CD8-positive, alpha-beta memory T cell (primary cell): ENCODE measurements at regions of chr1 and their contacts with region 1.

Region 1: DNA sequence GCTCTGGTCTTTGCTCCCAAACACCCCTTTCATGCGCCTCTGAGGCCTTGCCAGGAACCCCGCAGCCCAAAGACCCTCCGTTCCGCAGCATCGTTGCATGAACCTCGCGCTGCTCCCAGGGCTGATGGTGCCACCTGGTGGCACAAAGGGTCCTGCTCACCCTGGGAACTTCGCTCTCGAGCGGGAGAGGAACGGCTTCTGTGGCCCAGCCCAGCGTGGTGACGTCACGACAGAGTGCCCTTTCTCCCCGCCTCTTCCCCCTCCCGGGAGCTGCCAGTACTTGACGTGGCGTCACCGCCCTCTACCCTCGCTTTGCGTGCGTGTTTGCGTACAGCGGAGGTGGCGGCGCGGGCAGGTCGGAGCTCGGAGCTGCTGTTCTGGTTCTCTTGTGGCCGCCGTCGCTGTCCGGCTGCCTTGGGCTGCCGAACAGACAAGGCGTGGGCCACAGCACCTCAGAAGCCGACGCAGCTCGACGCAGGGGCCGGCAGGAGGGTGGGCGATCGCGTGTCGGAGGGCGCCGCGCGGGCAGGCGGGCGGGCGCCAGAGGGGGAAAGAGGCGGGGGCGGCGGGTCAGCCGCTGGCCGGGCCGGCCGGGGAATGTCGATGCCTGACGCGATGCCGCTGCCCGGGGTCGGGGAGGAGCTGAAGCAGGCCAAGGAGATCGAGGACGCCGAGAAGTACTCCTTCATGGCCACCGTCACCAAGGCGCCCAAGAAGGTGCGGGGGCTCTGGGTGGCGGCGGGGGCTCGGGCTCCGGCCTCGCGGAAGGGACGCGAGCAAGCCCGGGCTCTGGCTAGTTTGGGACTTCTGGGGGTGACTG is at the start of gene AHCYL1:
- DNase-seq: peak; percentile 98 to 99 (median 99)
- H3K4me3 ChIP-seq: peak within 1 kb of the TSS; percentile 75
- H3K4me3 Mint-ChIP-seq: peak within 1 kb of the TSS; percentile 92 to 99 (median 97)
- H3K27ac ChIP-seq: peak within 1 kb of the TSS; percentile 77
- H3K27ac Mint-ChIP-seq: peak within 1 kb of the TSS; percentile 68 to 100 (median 99)
- H3K4me1 ChIP-seq: peaks cover 36% of the 10 kb centered on the region
- H3K4me1 Mint-ChIP-seq: peaks cover 38 to 46% (median 44%) of the 10 kb centered on the region in 3 donors
- H3K27me3 ChIP-seq: no peaks in the 10 kb centered on the region
- H3K27me3 Mint-ChIP-seq: peaks cover 0 to 2% of the 10 kb centered on the region in 2 donors
- total RNA-seq, gene AHCYL1: 56.9 to 59.9 TPM

Region 2: GRCh38 chr1:109643385-109644230 is 341.1 kb before region 1 on chr1:
- CTCF ChIA-PET with region 1: interaction called, 90 read pairs
- POLR2A ChIA-PET with region 1: interaction called, 3 read pairs
- DNase-seq: peak; percentile 67 to 88 (median 74)
- H3K4me3 ChIP-seq: no peak overlapping the region
- H3K4me3 Mint-ChIP-seq: no peak overlapping the region
- H3K27ac ChIP-seq: no peak overlapping the region
- H3K27ac Mint-ChIP-seq: peak overlapping the region in 2 of 8 donors; percentile 29 to 54
- H3K4me1 ChIP-seq: peaks cover 4% of the 10 kb centered on the region
- H3K4me1 Mint-ChIP-seq: peaks cover 4 to 12% (median 7%) of the 10 kb centered on the region in 3 donors
- H3K27me3 ChIP-seq: no peaks in the 10 kb centered on the region
- H3K27me3 Mint-ChIP-seq: peaks cover 0 to 3% of the 10 kb centered on the region in 2 donors

Region 3: GRCh38 chr1:109773146-109773899 is 211.3 kb before region 1 on chr1:
- CTCF ChIA-PET with region 1: interaction called, 520 read pairs
- POLR2A ChIA-PET with region 1: interaction called, 19 read pairs
- DNase-seq: peak; percentile 27 to 81 (median 61)
- H3K4me3 ChIP-seq: no peak overlapping the region
- H3K4me3 Mint-ChIP-seq: no peak overlapping the region
- H3K27ac ChIP-seq: no peak overlapping the region
- H3K27ac Mint-ChIP-seq: peak overlapping the region in 2 of 8 donors; percentile 6 to 33
- H3K4me1 ChIP-seq: peaks cover 4% of the 10 kb centered on the region
- H3K4me1 Mint-ChIP-seq: peaks cover 5 to 15% (median 5%) of the 10 kb centered on the region in 3 donors
- H3K27me3 ChIP-seq: no peaks in the 10 kb centered on the region
- H3K27me3 Mint-ChIP-seq: peaks cover 10 to 19% of the 10 kb centered on the region in 2 donors

Region 4: GRCh38 chr1:109802901-109803561 is 181.6 kb before region 1 on chr1:
- CTCF ChIA-PET with region 1: interaction called, 20 read pairs
- POLR2A ChIA-PET with region 1: no interaction called
- DNase-seq: no peak
- H3K4me3 ChIP-seq: peak overlapping the region; percentile 48
- H3K4me3 Mint-ChIP-seq: peak overlapping the region; percentile 6 to 85 (median 77)
- H3K27ac ChIP-seq: peak overlapping the region; percentile 45
- H3K27ac Mint-ChIP-seq: peak overlapping the region; percentile 49 to 97 (median 89)
- H3K4me1 ChIP-seq: peaks cover 76% of the 10 kb centered on the region
- H3K4me1 Mint-ChIP-seq: peaks cover 53 to 66% (median 63%) of the 10 kb centered on the region in 3 donors
- H3K27me3 ChIP-seq: no peaks in the 10 kb centered on the region
- H3K27me3 Mint-ChIP-seq: peaks cover 0 to 8% of the 10 kb centered on the region in 2 donors

Region 5: DNA sequence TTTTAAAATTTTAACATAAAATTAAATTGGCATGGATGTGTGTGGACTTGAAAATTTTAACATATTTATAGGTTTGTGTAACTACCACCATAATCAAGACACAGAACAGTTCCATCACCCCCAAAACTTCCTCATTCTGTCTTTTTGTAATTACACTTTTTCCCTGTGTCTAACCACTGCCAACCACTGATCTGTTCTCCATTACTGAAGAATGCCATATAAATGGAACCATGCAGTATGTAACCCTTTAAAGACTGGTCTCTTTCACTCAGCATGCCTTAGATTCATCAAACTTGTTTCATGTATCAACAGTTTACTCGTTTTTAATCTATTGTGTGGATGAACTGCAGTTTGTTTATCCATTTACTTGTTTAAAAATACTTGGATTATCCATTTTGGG is 13.1 kb before region 1 on chr1:
- CTCF ChIA-PET with region 1: interaction called, 18 read pairs
- POLR2A ChIA-PET with region 1: no interaction called
- DNase-seq: no peak
- H3K4me3 ChIP-seq: no peak overlapping the region
- H3K4me3 Mint-ChIP-seq: no peak overlapping the region
- H3K27ac ChIP-seq: no peak overlapping the region
- H3K27ac Mint-ChIP-seq: no peak overlapping the region
- H3K4me1 ChIP-seq: no peaks in the 10 kb centered on the region
- H3K4me1 Mint-ChIP-seq: no peaks in the 10 kb centered on the region
- H3K27me3 ChIP-seq: peaks cover 4% of the 10 kb centered on the region
- H3K27me3 Mint-ChIP-seq: peaks cover 4 to 5% of the 10 kb centered on the region in 2 donors

Region 6: GRCh38 chr1:110011527-110012041 is 26.9 kb after region 1 on chr1:
- CTCF ChIA-PET with region 1: interaction called, 11 read pairs
- POLR2A ChIA-PET with region 1: no interaction called
- DNase-seq: peak in 1 of 5 donors; percentile 14
- H3K4me3 ChIP-seq: no peak overlapping the region
- H3K4me3 Mint-ChIP-seq: no peak overlapping the region
- H3K27ac ChIP-seq: no peak overlapping the region
- H3K27ac Mint-ChIP-seq: peak overlapping the region in 5 of 8 donors; percentile 36 to 78 (median 70)
- H3K4me1 ChIP-seq: no peaks in the 10 kb centered on the region
- H3K4me1 Mint-ChIP-seq: peaks cover 0 to 4% (median 3%) of the 10 kb centered on the region in 3 donors
- H3K27me3 ChIP-seq: no peaks in the 10 kb centered on the region
- H3K27me3 Mint-ChIP-seq: no peaks in the 10 kb centered on the region

Region 7: DNA sequence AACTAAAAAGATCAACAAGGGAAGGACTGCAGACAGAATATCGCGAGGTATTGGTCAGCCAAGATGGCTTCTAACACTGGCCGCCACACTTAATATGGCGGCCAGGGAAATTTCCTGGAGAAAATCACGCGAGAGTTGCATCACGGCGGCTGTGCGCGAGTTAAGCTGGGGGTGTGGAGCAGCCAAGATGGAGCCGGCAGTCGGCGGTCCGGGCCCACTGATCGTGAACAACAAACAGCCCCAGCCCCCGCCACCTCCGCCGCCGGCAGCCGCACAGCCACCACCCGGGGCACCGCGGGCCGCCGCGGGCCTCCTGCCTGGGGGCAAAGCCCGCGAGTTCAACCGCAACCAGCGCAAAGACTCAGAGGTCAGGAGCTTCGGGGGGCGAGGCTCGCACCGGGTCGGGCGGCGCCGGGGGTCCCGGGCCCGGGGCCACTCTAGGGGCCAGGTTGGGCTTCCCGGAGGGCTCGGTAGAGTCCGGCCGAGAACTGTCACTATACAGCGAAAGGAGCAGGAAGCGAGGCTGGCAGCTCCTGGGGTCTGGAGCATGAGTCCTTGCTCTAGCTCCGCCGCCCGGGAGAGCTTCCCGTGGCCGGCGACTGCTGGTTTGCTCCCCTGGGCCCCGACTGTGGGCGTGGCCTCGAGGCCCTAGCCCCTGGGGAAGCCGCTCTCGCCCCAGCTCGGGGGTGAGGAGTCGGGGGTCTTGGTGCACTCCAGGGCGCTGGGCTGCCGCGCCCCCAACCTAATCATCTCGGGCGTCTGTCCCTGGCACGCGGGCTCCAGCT is 50.0 kb after region 1 on chr1 and contains the start of gene STRIP1:
- CTCF ChIA-PET with region 1: interaction called, 15 read pairs
- POLR2A ChIA-PET with region 1: interaction called, 5 read pairs
- DNase-seq: peak; percentile 88 to 96 (median 93)
- H3K4me3 ChIP-seq: peak within 1 kb of the TSS; percentile 64
- H3K4me3 Mint-ChIP-seq: peak within 1 kb of the TSS; percentile 92 to 99 (median 94)
- H3K27ac ChIP-seq: peak within 1 kb of the TSS; percentile 90
- H3K27ac Mint-ChIP-seq: peak within 1 kb of the TSS; percentile 87 to 98 (median 94)
- H3K4me1 ChIP-seq: peaks cover 42% of the 10 kb centered on the region
- H3K4me1 Mint-ChIP-seq: peaks cover 53 to 68% (median 56%) of the 10 kb centered on the region in 3 donors
- H3K27me3 ChIP-seq: no peaks in the 10 kb centered on the region
- H3K27me3 Mint-ChIP-seq: no peaks in the 10 kb centered on the region
- total RNA-seq, gene STRIP1: 35.1 to 37.3 TPM